Left colon (tissue), 2 donors: ENCODE measurements at regions of chr11 and their contacts with region 1.

Region 1: GRCh38 chr11:124586238-124586860 is 16.6 kb downstream of the OR8A1 start:
- DNase-seq: peak in 1 of 2 donors; percentile 74
- ATAC-seq: peak; percentile 40

Region 2: DNA sequence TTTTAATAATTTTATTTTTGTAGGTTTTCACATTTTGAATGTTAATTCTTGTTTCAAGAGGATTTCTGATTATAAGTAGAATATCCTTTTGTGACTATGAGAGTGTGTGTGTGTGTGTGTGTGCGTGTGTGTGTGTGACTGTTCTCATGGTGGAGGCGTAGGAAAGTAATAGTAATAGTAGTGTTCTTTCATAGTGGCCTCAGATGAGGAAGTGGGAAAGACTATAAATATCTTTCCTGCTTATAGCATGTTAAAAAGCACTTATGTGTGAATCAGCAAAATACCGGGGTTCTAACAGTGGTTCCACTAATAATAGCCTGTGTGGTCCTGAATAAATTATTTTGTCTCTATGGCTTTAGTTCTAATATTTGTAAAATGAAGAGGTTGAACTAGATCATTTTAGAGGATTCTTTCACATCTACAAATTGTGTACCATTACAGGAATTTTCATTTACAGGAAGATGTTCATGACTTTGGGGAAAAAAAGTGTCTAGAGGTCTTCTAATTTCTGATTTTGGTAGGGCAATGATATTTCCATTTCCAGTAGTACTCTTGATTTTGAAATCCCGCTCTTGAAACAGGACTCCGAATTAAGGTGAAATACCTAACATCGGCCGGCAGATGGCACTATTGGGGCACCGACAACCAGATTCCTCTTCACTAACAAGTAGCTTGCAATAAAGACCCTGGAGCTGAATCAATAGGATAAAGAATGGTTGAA is 515.3 kb before region 1 on chr11:
- intact Hi-C with region 1: loop called in 1 of 2 experiments (anchors 5 kb)
- DNase-seq: peak in 1 of 2 donors; percentile 27
- ATAC-seq: no peak

Region 3: GRCh38 chr11:124415356-124415923 is 170.9 kb before region 1 on chr11:
- intact Hi-C with region 1: loop called in 1 of 2 experiments (anchors 10 kb)
- DNase-seq: no peak
- ATAC-seq: no peak

Region 4: GRCh38 chr11:124536520-124536919 is 49.8 kb before region 1 on chr11:
- intact Hi-C with region 1: no loop called
- DNase-seq: no peak
- ATAC-seq: no peak